ENCODE measurements at regions of chr17 and their contacts with region 1.

Region 1: GRCh38 chr17:44324571-44325275 is at the start of gene SLC25A39:
- DNase-seq: peak; percentile 90 to 100 (median 95)
- ATAC-seq: peak; percentile 92
- H3K4me3 ChIP-seq: peak within 1 kb of the TSS; percentile 94 to 99
- H3K27ac ChIP-seq: peak within 1 kb of the TSS; percentile 88 to 96
- H3K4me1 ChIP-seq: peaks cover 16 to 36% of the 10 kb centered on the region in 2 donors
- H3K27me3 ChIP-seq: no peaks in the 10 kb centered on the region
- CTCF ChIP-seq: no peak
- polyA plus RNA-seq, gene SLC25A39: 55.5 to 97.5 (median 85.9) TPM

Region 2: GRCh38 chr17:44210342-44211192 is 114.2 kb before region 1 on chr17:
- intact Hi-C with region 1: loop called (anchors 5 to 10 kb)
- DNase-seq: peak; percentile 72 to 99 (median 90)
- ATAC-seq: peak; percentile 97
- H3K4me3 ChIP-seq: no peak overlapping the region
- H3K27ac ChIP-seq: peak overlapping the region in 1 of 2 donors; percentile 67
- H3K4me1 ChIP-seq: peaks cover 8 to 32% of the 10 kb centered on the region in 2 donors
- H3K27me3 ChIP-seq: no peaks in the 10 kb centered on the region
- CTCF ChIP-seq: peak; percentile 95 to 100

Region 3: GRCh38 chr17:44218344-44219107 is 106.2 kb before region 1 on chr17:
- intact Hi-C with region 1: loop called (anchors 5 to 10 kb)
- DNase-seq: peak; percentile 87 to 97 (median 93)
- ATAC-seq: peak; percentile 75
- H3K4me3 ChIP-seq: peak overlapping the region; percentile 67 to 80
- H3K27ac ChIP-seq: peak overlapping the region; percentile 96 to 97
- H3K4me1 ChIP-seq: peaks cover 24 to 52% of the 10 kb centered on the region in 2 donors
- H3K27me3 ChIP-seq: no peaks in the 10 kb centered on the region
- CTCF ChIP-seq: peak; percentile 45 to 78

Measured in left lung (tissue), 14 donors.